Dorsolateral prefrontal cortex (tissue), 120 donors: ENCODE measurements at regions of chr11 and their contacts with region 1.

Region 1: GRCh38 chr11:44893846-44894617 is 56.7 kb downstream of the TP53I11 start:
- DNase-seq: peak; percentile 51 to 82 (median 60)
- H3K4me3 ChIP-seq: peak overlapping the region in 32 of 59 donors; percentile 1 to 52 (median 25)
- H3K27ac ChIP-seq: peak overlapping the region in 16 of 59 donors; percentile 8 to 90 (median 40)
- H3K27me3 ChIP-seq: peaks cover 0 to 4% (median 0%) of the 10 kb centered on the region in 45 donors
- CTCF ChIP-seq: peak; percentile 28 to 92 (median 81)

Region 2: GRCh38 chr11:44539971-44540370 is 354.1 kb before region 1 on chr11:
- intact Hi-C with region 1: no loop called
- DNase-seq: no peak
- H3K4me3 ChIP-seq: no peak overlapping the region
- H3K27ac ChIP-seq: no peak overlapping the region
- H3K27me3 ChIP-seq: peaks cover 0 to 2% (median 0%) of the 10 kb centered on the region in 45 donors
- CTCF ChIP-seq: no peak

Region 3: DNA sequence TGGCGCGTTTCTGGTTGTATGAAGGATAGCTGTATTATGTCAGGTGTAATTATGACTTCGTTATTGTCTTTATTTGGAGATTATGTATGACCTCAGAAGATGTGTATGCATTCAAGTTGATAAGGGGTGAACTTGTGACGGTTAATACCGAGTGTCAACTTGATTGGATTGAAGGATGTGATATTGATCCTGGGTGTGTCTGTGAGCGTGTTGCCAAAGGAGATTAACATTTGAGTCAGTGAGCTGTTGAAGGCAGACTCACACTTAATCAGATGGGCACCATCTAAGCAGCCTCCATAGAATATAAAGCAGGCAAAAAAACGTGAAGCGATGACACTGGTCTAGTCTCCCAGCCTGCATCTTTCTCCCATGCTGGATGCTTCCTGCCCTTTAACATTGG is 343.9 kb before region 1 on chr11:
- intact Hi-C with region 1: loop called (anchors 5 kb)
- DNase-seq: no peak
- H3K4me3 ChIP-seq: no peak overlapping the region
- H3K27ac ChIP-seq: no peak overlapping the region
- H3K27me3 ChIP-seq: no peaks in the 10 kb centered on the region
- CTCF ChIP-seq: no peak

Region 4: DNA sequence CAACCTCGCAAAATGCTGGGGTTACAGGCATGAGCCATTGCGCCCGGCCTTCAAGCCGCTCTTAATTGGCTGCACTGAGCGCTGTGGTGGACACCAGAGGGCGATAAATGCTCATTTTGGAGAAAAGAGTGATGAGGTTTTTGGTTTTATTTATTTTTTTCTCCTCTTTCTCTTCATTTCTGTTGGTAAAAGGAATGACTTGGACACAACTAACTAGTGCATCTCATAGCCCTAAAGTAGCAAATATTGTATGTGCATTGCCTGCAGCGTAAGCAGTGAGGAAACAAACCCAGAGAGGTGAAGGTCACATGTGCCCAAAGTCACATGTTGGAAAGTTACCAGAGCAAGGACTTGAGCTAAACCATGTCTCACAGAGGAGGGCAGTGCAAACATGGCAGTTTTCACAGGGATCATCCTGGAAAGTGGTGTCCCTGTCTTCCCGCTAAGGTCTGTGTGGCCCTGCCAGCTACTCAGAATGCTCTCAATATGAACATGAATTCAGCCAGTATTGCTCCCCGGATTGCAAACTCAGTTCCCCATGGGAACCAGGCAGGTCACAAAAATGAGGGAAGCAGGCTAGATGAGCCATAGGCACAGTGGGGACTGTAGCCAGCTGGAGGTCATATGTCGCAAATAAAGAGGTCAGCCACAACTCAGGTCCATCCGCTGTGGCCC is 337.2 kb before region 1 on chr11:
- intact Hi-C with region 1: loop called (anchors 5 kb)
- DNase-seq: peak in 8 of 10 donors; percentile 61 to 80 (median 69)
- H3K4me3 ChIP-seq: no peak overlapping the region
- H3K27ac ChIP-seq: peak overlapping the region in 23 of 59 donors; percentile 2 to 74 (median 40)
- H3K27me3 ChIP-seq: no peaks in the 10 kb centered on the region
- CTCF ChIP-seq: peak; percentile 40 to 95 (median 84)

Region 5: DNA sequence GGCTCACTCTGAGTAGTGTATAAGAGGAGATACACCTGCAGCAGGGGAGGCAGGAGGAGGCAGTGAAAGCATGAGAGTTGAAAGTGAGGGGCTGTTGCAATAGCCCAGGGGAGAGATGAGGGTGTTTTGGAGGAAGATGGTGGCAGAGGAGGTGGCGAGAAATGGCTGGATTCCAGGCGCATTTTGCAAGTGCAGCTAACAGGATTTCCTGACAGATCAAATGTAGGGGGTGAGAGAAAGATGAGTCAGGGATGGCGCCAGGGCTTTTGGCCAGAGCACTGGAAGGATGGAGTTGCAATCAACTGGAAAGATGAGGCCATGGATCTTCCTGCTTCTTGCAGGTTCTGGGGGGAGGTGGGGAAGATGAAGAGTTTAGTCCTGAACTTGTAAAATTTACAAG is 184.1 kb before region 1 on chr11:
- intact Hi-C with region 1: loop called in 1 of 2 experiments (anchors 5 kb)
- DNase-seq: peak in 5 of 10 donors; percentile 19 to 73 (median 60)
- H3K4me3 ChIP-seq: no peak overlapping the region
- H3K27ac ChIP-seq: no peak overlapping the region
- H3K27me3 ChIP-seq: no peaks in the 10 kb centered on the region
- CTCF ChIP-seq: no peak